ENCODE measurements at regions of chr13 and their contacts with region 1.

Region 1: DNA sequence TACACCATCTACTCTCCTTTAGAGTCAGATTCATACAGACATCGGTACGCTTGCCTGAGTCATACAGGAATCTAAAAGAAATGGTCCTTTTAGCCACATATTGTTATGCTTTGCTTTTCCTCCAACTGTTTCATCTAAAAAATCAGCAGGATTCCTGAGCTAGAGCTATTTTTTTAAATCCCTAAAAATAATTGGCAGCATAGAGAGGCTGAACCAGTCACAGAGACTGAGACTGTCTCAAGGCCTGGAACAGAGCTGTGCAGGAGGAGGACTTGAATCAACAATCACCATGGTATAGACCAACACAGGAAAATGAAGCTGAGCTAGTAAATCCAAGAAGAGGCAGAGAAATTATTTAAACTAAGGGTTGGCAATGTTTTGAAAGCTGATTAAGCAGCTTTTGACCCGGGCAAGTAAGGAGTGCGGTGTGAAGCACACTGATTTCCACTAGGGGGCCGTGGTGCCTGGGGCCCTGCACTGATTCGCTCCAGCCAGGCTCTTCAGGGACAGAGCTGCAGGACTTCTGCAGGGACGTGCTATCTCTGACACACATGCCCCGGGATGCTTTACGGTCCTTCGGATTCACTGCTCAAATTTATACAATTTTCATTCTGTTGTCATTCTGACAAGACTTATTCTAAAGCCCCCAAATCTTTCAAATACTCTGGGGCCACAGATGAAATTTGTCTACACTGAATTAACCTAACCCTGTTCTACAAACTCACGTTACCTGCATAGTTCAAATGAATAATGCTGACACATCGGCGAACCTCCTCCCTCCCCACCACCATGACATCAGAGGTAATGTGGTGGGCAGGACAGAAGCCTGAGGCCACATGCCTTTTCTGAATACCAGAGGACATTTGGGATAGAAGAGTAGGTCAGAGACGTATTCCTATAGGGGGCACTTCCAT is 87.6 kb upstream of the SLC15A1 start:
- DNase-seq: peak; percentile 78
- ATAC-seq: peak; percentile 99
- H3K4me3 Mint-ChIP-seq: no peak overlapping the region
- H3K27ac Mint-ChIP-seq: peak overlapping the region; percentile 60; the same call in 1 of the 2 replicates
- H3K4me1 Mint-ChIP-seq: peaks cover 13% of the 10 kb centered on the region
- H3K27me3 Mint-ChIP-seq: no peaks in the 10 kb centered on the region
- CTCF ChIP-seq: peak; percentile 87

Region 2: DNA sequence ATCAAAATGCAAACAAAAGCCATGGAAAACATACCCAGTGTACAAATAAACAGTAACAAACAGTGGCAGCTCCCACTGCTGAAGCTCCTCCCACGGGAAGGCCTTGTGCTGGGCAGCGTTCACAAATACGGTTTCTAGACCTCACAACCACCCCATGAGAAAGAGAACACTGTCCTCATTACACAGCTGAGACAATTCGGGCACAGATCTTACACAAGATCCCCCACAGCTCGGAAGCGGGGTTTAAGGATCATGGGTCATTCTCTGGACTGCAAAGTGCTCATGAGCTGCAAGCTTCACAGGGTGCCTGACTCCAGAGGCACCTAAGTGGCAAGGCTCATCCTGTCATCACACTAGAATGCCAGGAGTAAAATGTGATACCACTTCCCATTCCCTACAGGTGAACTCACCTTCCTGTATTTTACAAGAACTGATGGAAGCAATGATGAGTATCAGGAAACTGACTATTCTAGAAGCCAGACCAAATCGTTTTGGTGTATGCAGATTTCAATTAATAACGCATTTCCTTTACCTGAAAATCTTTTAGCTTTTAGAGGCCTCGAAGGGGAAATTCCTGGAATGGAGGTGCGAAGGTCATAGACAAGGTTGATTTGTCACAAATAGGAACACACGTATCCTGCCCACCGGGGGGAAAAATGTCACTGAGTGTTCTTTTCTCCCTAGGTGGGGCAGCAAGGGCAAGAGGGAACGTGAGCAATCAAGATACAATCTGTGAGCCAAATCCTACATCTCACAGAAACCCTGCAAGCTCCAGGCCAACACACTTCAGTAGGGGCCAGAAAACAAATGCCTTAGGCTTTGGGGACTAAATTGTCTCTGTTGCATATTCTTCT is 304.4 kb before region 1 on chr13:
- CTCF ChIA-PET with region 1: no interaction called
- POLR2A ChIA-PET with region 1: no interaction called
- DNase-seq: no peak
- ATAC-seq: no peak
- H3K4me3 Mint-ChIP-seq: no peak overlapping the region
- H3K27ac Mint-ChIP-seq: peak overlapping the region; percentile 88
- H3K4me1 Mint-ChIP-seq: peaks cover 71% of the 10 kb centered on the region
- H3K27me3 Mint-ChIP-seq: no peaks in the 10 kb centered on the region
- CTCF ChIP-seq: no peak

Region 3: GRCh38 chr13:98807774-98808173 is 32.3 kb before region 1 on chr13:
- CTCF ChIA-PET with region 1: interaction called, 11 read pairs
- POLR2A ChIA-PET with region 1: no interaction called
- DNase-seq: no peak
- ATAC-seq: peak; percentile 73
- H3K4me3 Mint-ChIP-seq: 0 out of 2 replicates have a peak overlapping the region, but pooled peaks have one; percentile 1
- H3K27ac Mint-ChIP-seq: peak overlapping the region; percentile 75
- H3K4me1 Mint-ChIP-seq: peaks cover 31% of the 10 kb centered on the region
- H3K27me3 Mint-ChIP-seq: no peaks in the 10 kb centered on the region
- CTCF ChIP-seq: no peak

Region 4: DNA sequence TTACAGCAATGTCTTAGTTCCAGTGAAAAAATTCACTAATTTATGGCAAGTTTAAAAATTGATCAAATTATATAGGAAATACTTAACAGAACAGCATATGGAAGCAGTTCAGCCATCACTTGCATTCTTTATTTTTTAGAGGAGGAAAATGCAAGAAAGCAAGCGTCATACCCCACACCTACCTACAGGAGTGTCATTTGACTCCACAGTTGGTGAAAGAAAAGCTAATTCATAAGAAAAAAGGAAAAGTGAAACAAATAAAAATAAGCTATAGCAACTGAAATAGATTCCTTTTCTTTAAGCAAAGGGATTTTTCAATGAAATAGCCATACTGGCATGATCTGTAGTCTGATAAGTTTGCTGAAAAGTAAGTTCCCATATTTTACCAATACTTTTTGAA is 26.8 kb after region 1 on chr13:
- CTCF ChIA-PET with region 1: interaction called, 10 read pairs
- POLR2A ChIA-PET with region 1: no interaction called
- DNase-seq: no peak
- ATAC-seq: no peak
- H3K4me3 Mint-ChIP-seq: no peak overlapping the region
- H3K27ac Mint-ChIP-seq: no peak overlapping the region
- H3K4me1 Mint-ChIP-seq: 0 out of 2 replicates have a peak, but pooled peaks cover 4% of the 10 kb centered on the region
- H3K27me3 Mint-ChIP-seq: no peaks in the 10 kb centered on the region
- CTCF ChIP-seq: no peak

Region 5: DNA sequence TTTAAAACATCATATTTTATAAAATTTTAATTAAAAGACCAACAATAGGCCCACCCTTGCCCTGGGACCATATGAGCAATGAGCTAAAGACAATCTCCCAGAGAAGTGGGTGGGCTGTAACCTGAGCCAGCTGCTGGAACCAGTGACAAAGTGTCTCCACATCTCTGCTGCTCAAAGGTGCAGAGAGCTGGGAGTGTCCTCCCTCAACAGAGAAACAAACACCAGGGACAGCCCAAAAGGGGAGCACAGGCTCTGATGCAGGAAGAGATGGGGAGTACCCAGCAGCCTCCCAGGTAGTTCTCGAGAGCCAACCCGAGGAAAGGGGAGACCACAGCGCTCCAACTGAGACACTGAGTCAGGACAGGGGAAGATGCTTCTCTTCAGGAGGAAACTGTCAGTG is 98.7 kb after region 1 on chr13:
- CTCF ChIA-PET with region 1: interaction called, 10 read pairs
- POLR2A ChIA-PET with region 1: no interaction called
- DNase-seq: peak; percentile 40
- ATAC-seq: peak; percentile 73
- H3K4me3 Mint-ChIP-seq: no peak overlapping the region
- H3K27ac Mint-ChIP-seq: peak overlapping the region; percentile 88
- H3K4me1 Mint-ChIP-seq: peaks cover 42% of the 10 kb centered on the region
- H3K27me3 Mint-ChIP-seq: no peaks in the 10 kb centered on the region
- CTCF ChIP-seq: no peak